Naive thymus-derived CD4-positive, alpha-beta T cell (primary cell): ENCODE measurements at regions of chr3 and their contacts with region 1.

Region 1: GRCh38 chr3:179322286-179323196 is at the start of gene ZNF639:
- DNase-seq: peak; percentile 80 to 89 (median 85)
- ATAC-seq: peak; percentile 94
- H3K4me3 ChIP-seq: peak within 1 kb of the TSS; percentile 93
- H3K4me3 Mint-ChIP-seq: peak within 1 kb of the TSS; percentile 88 to 96 (median 94)
- H3K27ac ChIP-seq: peak within 1 kb of the TSS; percentile 98
- H3K27ac Mint-ChIP-seq: peak within 1 kb of the TSS; percentile 81 to 98 (median 93)
- H3K4me1 ChIP-seq: peaks cover 9 to 22% of the 10 kb centered on the region in 2 donors
- H3K4me1 Mint-ChIP-seq: peaks cover 22 to 48% (median 37%) of the 10 kb centered on the region in 7 donors
- H3K27me3 ChIP-seq: no peaks in the 10 kb centered on the region
- H3K27me3 Mint-ChIP-seq: peaks cover 0 to 16% (median 0%) of the 10 kb centered on the region in 5 donors
- total RNA-seq, gene ZNF639: 33.1 to 74.9 (median 46.0) TPM

Region 2: GRCh38 chr3:179015551-179016020 is 307.0 kb before region 1 on chr3:
- CTCF ChIA-PET with region 1: interaction called, 17 read pairs
- POLR2A ChIA-PET with region 1: interaction called, 6 read pairs
- intact Hi-C with region 1: loop called in 1 of 2 experiments (anchors 1 kb)
- DNase-seq: peak in 8 of 9 donors; percentile 41 to 87 (median 82)
- ATAC-seq: peak; percentile 99
- H3K4me3 ChIP-seq: no peak overlapping the region
- H3K4me3 Mint-ChIP-seq: peak overlapping the region in 1 of 10 donors; percentile 35
- H3K27ac ChIP-seq: no peak overlapping the region
- H3K27ac Mint-ChIP-seq: peak overlapping the region in 5 of 9 donors; percentile 2 to 53 (median 32)
- H3K4me1 ChIP-seq: peaks cover 0 to 20% of the 10 kb centered on the region in 2 donors
- H3K4me1 Mint-ChIP-seq: peaks cover 15 to 42% (median 41%) of the 10 kb centered on the region in 7 donors
- H3K27me3 ChIP-seq: no peaks in the 10 kb centered on the region
- H3K27me3 Mint-ChIP-seq: peaks cover 0 to 19% (median 0%) of the 10 kb centered on the region in 5 donors

Region 3: DNA sequence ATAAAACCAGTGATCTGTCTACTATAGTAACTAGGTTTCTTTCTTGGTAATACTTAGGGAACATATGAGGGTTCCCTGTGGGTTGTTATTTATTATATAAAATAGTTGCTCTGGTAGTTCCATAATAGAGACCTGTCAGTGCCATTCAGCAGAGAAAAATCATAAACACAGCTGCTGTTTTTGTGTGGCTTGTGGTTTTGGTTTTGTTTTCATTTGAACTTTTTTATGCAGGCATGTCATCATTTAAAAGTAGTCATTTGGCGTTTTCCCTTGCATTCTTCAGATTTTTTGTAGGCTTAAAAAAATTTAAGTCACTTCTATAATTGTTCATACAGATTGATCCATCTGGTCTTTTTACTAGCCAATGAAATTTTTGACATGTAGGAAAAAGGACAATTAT is 126.4 kb before region 1 on chr3:
- CTCF ChIA-PET with region 1: no interaction called
- POLR2A ChIA-PET with region 1: no interaction called
- intact Hi-C with region 1: loop called in 1 of 2 experiments (anchors 5 kb)
- DNase-seq: peak in 7 of 9 donors; percentile 49 to 72 (median 53)
- ATAC-seq: peak; percentile 78
- H3K4me3 ChIP-seq: no peak overlapping the region
- H3K4me3 Mint-ChIP-seq: peak overlapping the region in 5 of 10 donors; percentile 21 to 79 (median 50)
- H3K27ac ChIP-seq: no peak overlapping the region
- H3K27ac Mint-ChIP-seq: peak overlapping the region in 8 of 9 donors; percentile 12 to 88 (median 53)
- H3K4me1 ChIP-seq: peaks cover 4 to 23% of the 10 kb centered on the region in 2 donors
- H3K4me1 Mint-ChIP-seq: peaks cover 22 to 67% (median 63%) of the 10 kb centered on the region in 7 donors
- H3K27me3 ChIP-seq: no peaks in the 10 kb centered on the region
- H3K27me3 Mint-ChIP-seq: no peaks in the 10 kb centered on the region

Region 4: DNA sequence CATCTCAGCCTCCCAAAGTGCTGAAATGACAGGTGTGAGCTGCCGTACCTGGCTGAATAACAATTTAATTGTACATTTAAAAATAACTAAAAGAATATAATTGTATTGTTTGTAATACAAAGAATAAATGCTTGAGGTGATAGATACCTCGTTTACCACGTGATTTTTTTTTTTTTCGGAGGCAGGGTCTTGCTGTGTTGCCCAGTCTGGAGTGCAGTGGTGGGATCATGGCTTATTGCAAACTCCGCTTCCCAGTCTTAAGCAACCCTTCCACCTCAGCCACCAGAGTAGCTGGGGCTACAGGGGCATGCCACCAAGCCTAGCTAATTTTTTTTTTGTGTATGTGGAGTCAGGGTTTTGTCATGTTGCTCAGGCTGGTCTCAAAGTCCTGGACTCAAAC is 40.8 kb after region 1 on chr3:
- CTCF ChIA-PET with region 1: interaction called, 3 read pairs
- POLR2A ChIA-PET with region 1: interaction called, 3 read pairs
- intact Hi-C with region 1: loop called in 1 of 2 experiments (anchors 5 kb)
- DNase-seq: no peak
- ATAC-seq: no peak
- H3K4me3 ChIP-seq: no peak overlapping the region
- H3K4me3 Mint-ChIP-seq: no peak overlapping the region
- H3K27ac ChIP-seq: no peak overlapping the region
- H3K27ac Mint-ChIP-seq: no peak overlapping the region
- H3K4me1 ChIP-seq: no peaks in the 10 kb centered on the region
- H3K4me1 Mint-ChIP-seq: peaks cover 0 to 4% (median 0%) of the 10 kb centered on the region in 7 donors
- H3K27me3 ChIP-seq: no peaks in the 10 kb centered on the region
- H3K27me3 Mint-ChIP-seq: no peaks in the 10 kb centered on the region

Region 5: DNA sequence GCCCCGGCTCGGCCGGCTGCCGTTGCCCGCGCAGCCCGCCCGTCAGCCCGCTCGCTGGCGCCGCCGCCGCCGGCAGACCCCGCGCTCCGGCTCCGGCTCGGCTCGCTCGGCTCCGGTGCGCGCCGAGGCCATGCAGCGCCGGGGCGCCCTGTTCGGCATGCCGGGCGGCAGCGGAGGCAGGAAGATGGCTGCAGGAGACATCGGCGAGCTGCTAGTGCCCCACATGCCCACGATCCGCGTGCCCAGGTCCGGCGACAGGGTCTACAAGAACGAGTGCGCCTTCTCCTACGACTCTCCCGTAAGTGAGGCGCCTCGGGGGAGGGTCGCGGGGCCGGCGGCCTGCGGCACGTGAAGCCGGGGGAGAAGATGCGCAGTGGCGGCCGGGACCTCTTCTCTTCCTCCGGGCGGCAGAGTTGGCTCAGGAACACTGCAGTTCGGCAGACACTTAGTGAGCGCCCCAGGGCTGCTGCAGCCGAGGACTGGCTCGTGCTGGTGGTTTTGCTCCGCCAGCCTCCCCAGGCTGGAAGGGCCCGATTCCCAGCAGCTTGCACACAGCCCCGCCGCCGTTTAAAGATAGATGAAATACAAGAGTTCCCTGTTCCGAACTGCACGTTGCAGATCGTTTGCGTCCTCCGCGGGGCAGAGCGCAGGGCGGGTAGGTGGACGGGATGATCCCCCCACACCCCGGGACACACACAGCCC is 330.7 kb after region 1 on chr3:
- CTCF ChIA-PET with region 1: no interaction called
- POLR2A ChIA-PET with region 1: interaction called, 5 read pairs
- intact Hi-C with region 1: loop called in 1 of 2 experiments (anchors 2 kb)
- DNase-seq: peak; percentile 46 to 74 (median 71)
- ATAC-seq: peak; percentile 71
- H3K4me3 ChIP-seq: peak overlapping the region; percentile 83
- H3K4me3 Mint-ChIP-seq: peak overlapping the region; percentile 87 to 98 (median 94)
- H3K27ac ChIP-seq: peak overlapping the region; percentile 74
- H3K27ac Mint-ChIP-seq: peak overlapping the region; percentile 84 to 90 (median 87)
- H3K4me1 ChIP-seq: peaks cover 0 to 7% of the 10 kb centered on the region in 2 donors
- H3K4me1 Mint-ChIP-seq: peaks cover 20 to 55% (median 41%) of the 10 kb centered on the region in 7 donors
- H3K27me3 ChIP-seq: no peaks in the 10 kb centered on the region
- H3K27me3 Mint-ChIP-seq: peaks cover 0 to 19% (median 0%) of the 10 kb centered on the region in 5 donors